ENCODE measurements at regions of chr17 and their contacts with region 1.

Region 1: GRCh38 chr17:65561394-65562205 is at the start of gene AXIN2:
- DNase-seq: peak; percentile 92
- ATAC-seq: peak; percentile 82
- H3K4me3 Mint-ChIP-seq: no peak within 1 kb of the TSS
- H3K27ac Mint-ChIP-seq: peak within 1 kb of the TSS; percentile 51
- H3K4me1 Mint-ChIP-seq: peaks cover 28% of the 10 kb centered on the region
- H3K27me3 Mint-ChIP-seq: peaks cover 4% of the 10 kb centered on the region
- total RNA-seq, gene AXIN2: 2.6 to 3.0 TPM

Region 2: DNA sequence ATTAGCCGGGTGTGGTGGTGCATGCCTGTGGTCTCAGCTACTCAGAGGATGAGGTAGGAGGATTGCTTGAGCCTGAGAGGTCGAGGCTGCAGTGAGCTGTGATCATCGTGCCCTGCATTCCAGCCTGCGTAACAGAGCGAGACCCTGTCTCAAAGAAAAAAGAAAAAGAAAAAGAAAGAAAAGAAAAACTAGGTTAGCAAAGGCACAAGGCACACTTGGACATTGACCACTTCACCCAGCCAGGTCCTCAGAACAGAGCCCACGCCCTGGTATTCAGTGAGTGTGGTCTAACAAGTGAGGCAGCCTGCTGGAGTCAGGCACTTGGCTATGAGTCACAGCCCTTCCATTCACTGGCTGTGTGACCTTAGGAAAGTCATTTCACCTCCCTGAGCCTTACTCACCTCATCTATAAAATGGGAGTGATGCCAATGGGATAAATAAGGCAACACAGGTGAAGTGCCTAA is 1102.3 kb before region 1 on chr17:
- CTCF ChIA-PET with region 1: no interaction called
- POLR2A ChIA-PET with region 1: no interaction called
- intact Hi-C with region 1: no loop called
- DNase-seq: peak; percentile 21
- ATAC-seq: peak; percentile 75
- H3K4me3 Mint-ChIP-seq: no peak overlapping the region
- H3K27ac Mint-ChIP-seq: no peak overlapping the region
- H3K4me1 Mint-ChIP-seq: peaks cover 12% of the 10 kb centered on the region
- H3K27me3 Mint-ChIP-seq: no peaks in the 10 kb centered on the region

Region 3: GRCh38 chr17:65584604-65585541 is 23.3 kb after region 1 on chr17:
- CTCF ChIA-PET with region 1: interaction called, 6 read pairs
- POLR2A ChIA-PET with region 1: no interaction called
- intact Hi-C with region 1: loop called in 1 of 2 experiments (anchors 1 kb)
- DNase-seq: no peak
- ATAC-seq: peak; percentile 77
- H3K4me3 Mint-ChIP-seq: no peak overlapping the region
- H3K27ac Mint-ChIP-seq: peak overlapping the region; percentile 72
- H3K4me1 Mint-ChIP-seq: peaks cover 43% of the 10 kb centered on the region
- H3K27me3 Mint-ChIP-seq: no peaks in the 10 kb centered on the region